ENCODE measurements at regions of chr14 and their contacts with region 1.

Region 1: GRCh38 chr14:65471038-65471878 is 58.7 kb downstream of the FUT8 start:
- DNase-seq: no peak
- ATAC-seq: no peak
- H3K4me3 ChIP-seq: no peak overlapping the region
- H3K27ac ChIP-seq: no peak overlapping the region
- H3K4me1 ChIP-seq: peaks cover 0 to 4% (median 0%) of the 10 kb centered on the region in 12 donors
- H3K27me3 ChIP-seq: no peaks in the 10 kb centered on the region
- CTCF ChIP-seq: no peak
- POLR2A ChIP-seq: no peak

Region 2: GRCh38 chr14:65421201-65421981 is 49.9 kb before region 1 on chr14:
- intact Hi-C with region 1: no loop called
- DNase-seq: no peak
- ATAC-seq: no peak
- H3K4me3 ChIP-seq: no peak overlapping the region
- H3K27ac ChIP-seq: no peak overlapping the region
- H3K4me1 ChIP-seq: no peaks in the 10 kb centered on the region
- H3K27me3 ChIP-seq: no peaks in the 10 kb centered on the region
- CTCF ChIP-seq: no peak
- POLR2A ChIP-seq: no peak

Region 3: GRCh38 chr14:65438266-65438933 is 32.9 kb before region 1 on chr14:
- intact Hi-C with region 1: loop called in 1 of 10 experiments (anchors 5 kb)
- DNase-seq: no peak
- ATAC-seq: no peak
- H3K4me3 ChIP-seq: no peak overlapping the region
- H3K27ac ChIP-seq: no peak overlapping the region
- H3K4me1 ChIP-seq: peaks cover 0 to 13% (median 0%) of the 10 kb centered on the region in 12 donors
- H3K27me3 ChIP-seq: no peaks in the 10 kb centered on the region
- CTCF ChIP-seq: no peak
- POLR2A ChIP-seq: no peak

Measured in heart left ventricle (tissue), 16 donors.